OCI-LY7 (cell line): ENCODE measurements at regions of chr3 and their contacts with region 1.

Region 1: DNA sequence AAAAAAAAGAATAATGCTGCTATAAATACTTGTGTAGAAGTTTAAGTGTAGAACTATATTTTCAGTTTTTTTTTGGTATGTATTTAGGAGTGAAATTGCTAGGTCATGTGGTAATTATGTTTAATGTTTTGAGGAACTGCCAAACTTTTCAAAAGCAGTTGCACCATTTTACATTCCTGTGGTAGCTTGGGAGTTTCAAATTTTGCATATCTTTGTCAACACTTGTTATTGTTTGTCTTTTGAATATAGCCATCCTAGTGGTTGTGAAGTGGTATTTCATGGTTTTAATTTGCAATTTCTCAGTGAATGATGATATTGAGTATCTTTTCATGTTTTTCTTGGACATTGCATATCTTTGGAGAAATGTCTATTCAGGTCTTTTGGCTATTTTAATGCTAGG is 30.4 kb downstream of the SKIL start:
- DNase-seq: no peak
- H3K4me3 ChIP-seq: no peak overlapping the region
- H3K27ac ChIP-seq: no peak overlapping the region
- H3K4me1 ChIP-seq: no peaks in the 10 kb centered on the region
- CTCF ChIP-seq: no peak

Region 2: DNA sequence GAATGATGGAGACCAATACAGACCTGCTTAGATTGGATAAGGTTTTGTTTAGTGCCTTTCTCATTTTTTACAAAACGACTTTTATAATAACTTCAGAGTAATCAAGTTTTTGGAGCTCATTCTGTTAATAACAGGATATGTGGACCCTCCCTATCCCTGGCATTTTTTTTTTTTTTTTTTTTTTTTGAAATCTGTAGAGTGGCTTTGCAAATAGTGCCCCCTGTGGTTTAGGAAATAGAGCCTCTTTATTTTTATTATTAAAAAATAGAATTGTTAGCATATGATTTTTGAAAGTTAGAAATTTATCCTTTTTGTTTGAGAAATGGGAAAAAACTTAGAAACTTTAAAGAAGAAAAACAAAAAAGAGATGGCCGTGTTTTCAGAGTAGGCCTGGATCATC is 19.0 kb before region 1 on chr3:
- CTCF ChIA-PET with region 1: no interaction called
- POLR2A ChIA-PET with region 1: interaction called, 29 read pairs
- intact Hi-C with region 1: no loop called
- DNase-seq: no peak
- H3K4me3 ChIP-seq: peak overlapping the region; percentile 69
- H3K27ac ChIP-seq: peak overlapping the region; percentile 80
- H3K4me1 ChIP-seq: peaks cover 81% of the 10 kb centered on the region
- CTCF ChIP-seq: peak; percentile 86